ENCODE measurements at regions of chr10 and their contacts with region 1.

Region 1: DNA sequence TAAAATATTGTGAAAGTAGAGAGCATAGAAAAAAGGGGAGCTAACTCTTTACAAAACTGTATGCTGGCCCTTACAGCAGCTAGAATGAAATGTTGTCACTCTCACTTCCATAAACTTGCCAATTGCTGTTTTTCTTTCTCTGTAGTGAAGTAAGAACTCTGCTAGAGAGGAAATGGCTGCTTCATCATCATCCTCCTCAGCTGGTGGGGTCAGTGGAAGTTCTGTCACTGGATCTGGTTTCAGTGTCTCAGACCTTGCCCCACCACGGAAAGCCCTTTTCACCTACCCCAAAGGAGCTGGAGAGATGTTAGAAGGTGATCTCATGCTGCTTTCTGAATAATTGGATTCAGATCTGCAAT is 7.6 kb upstream of the ASCC1 start:
- DNase-seq: no peak
- H3K4me3 ChIP-seq: peak overlapping the region in 1 of 59 donors; percentile 42
- H3K27ac ChIP-seq: peak overlapping the region in 57 of 59 donors; percentile 11 to 86 (median 74)
- H3K27me3 ChIP-seq: no peaks in the 10 kb centered on the region
- CTCF ChIP-seq: no peak

Region 2: GRCh38 chr10:71893920-71894319 is 329.8 kb before region 1 on chr10:
- intact Hi-C with region 1: loop called in 1 of 2 experiments (anchors 10 kb)
- DNase-seq: no peak
- H3K4me3 ChIP-seq: no peak overlapping the region
- H3K27ac ChIP-seq: no peak overlapping the region
- H3K27me3 ChIP-seq: no peaks in the 10 kb centered on the region
- CTCF ChIP-seq: no peak

Region 3: GRCh38 chr10:71957546-71958275 is 266.0 kb before region 1 on chr10:
- intact Hi-C with region 1: loop called (anchors 10 kb)
- DNase-seq: no peak
- H3K4me3 ChIP-seq: no peak overlapping the region
- H3K27ac ChIP-seq: peak overlapping the region in 55 of 59 donors; percentile 1 to 86 (median 64)
- H3K27me3 ChIP-seq: no peaks in the 10 kb centered on the region
- CTCF ChIP-seq: peak in 6 of 56 donors; percentile 6 to 22 (median 12)

Region 4: GRCh38 chr10:72058989-72059842 is 164.5 kb before region 1 on chr10:
- intact Hi-C with region 1: loop called (anchors 5 to 10 kb)
- DNase-seq: peak in 1 of 10 donors; percentile 49
- H3K4me3 ChIP-seq: no peak overlapping the region
- H3K27ac ChIP-seq: peak overlapping the region in 3 of 59 donors; percentile 12 to 44 (median 27)
- H3K27me3 ChIP-seq: no peaks in the 10 kb centered on the region
- CTCF ChIP-seq: no peak

Region 5: DNA sequence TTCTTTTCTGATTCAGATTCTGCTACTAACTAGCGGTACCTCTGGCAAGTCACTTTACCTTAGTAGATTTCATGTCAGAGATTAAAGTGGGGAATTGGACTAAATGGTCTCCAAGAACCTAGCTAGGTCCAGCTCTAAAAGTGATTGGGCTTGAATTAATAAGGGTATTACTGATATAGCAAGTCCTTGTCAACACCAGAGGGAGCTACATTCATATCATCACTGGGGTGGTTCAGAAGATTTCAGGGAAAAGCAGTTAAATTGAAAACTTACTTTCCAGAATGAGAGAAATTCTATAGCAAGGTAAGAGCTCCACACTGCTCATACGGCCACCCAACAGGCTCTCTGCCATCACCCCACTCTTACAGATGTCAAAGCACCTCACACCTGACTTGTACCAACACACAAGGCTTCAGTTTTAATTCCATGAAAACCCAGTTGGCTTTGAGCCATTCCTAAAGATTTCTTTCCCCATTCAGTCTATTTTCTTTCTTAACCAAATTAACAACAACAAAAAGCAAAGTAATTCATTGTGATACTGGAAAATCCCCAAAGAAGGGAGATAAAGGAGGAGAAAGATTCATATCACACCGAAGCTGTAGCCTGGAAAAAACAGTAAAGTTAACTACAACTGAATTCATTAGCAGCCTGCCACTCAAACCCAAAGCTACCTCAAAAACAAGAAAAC is 97.4 kb before region 1 on chr10:
- intact Hi-C with region 1: loop called (anchors 1 to 10 kb)
- DNase-seq: no peak
- H3K4me3 ChIP-seq: no peak overlapping the region
- H3K27ac ChIP-seq: peak overlapping the region in 35 of 59 donors; percentile 0 to 71 (median 38)
- H3K27me3 ChIP-seq: no peaks in the 10 kb centered on the region
- CTCF ChIP-seq: peak; percentile 16 to 71 (median 50)

Region 6: DNA sequence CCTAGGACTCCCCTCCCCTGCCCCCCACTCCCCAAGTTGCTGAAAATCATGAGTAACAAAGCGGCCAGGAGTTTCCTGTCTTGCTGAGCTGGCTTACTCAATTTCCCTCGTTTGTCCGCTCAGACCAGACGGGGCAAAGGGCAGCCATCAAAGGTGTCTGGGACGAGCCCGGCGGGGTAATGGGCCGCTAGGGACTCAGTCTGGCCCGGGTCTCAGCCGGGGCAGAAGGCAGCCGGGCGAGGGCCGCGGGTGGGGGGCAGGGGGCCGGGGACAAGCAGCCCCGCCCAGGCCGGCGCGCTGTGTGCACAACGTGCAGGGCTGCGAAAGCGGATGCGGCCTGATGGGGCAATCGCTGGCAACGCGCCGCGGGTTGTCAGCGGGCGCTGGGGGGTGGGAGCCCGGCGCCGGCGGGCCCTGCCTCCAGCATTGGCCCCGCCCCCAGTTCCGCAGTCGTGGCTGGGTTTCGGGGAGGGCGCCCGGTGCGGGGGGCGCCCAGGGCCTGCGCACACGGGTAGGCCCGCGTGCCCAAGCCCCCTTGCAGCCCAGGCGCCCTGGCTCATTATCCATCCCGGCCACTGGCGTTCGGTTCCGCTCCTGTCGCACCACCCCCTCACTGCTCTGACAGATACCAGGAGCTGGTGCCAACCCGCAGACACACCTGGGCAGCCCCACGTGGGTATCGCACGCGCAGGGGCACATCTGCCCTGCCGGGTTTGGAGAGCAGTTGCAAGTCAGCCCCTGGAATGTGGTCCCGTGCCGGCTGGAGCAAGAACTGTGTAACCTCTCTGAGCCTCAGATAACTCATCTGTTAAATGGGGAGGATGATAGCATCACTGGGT is 95.9 kb after region 1 on chr10:
- intact Hi-C with region 1: loop called in 1 of 2 experiments (anchors 5 kb)
- DNase-seq: peak in 9 of 10 donors; percentile 58 to 90 (median 81)
- H3K4me3 ChIP-seq: peak overlapping the region; percentile 35 to 70 (median 53)
- H3K27ac ChIP-seq: peak overlapping the region; percentile 40 to 98 (median 92)
- H3K27me3 ChIP-seq: no peaks in the 10 kb centered on the region
- CTCF ChIP-seq: peak in 14 of 56 donors; percentile 4 to 31 (median 20)

Region 7: DNA sequence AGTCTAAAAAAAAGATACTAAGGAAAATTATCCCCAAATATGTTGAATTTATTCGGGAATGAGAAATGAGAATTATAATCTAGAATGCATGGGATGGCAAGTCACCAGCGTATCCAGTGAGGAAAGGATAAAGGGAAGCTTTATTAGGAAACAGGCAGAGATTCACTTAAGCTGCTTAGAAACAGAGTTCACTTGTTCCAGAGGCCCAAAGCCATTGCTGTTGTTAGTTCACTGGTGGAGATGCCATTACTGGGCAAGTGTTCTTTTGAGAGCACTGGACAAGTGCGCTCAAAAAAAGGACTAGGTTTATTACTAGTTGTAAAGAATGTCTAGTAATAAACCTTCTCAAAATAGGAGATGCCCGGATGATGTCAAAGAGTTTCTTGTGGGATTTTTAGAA is 350.9 kb after region 1 on chr10:
- intact Hi-C with region 1: no loop called
- DNase-seq: no peak
- H3K4me3 ChIP-seq: peak overlapping the region in 3 of 59 donors; percentile 1 to 5 (median 4)
- H3K27ac ChIP-seq: peak overlapping the region in 34 of 59 donors; percentile 2 to 73 (median 40)
- H3K27me3 ChIP-seq: no peaks in the 10 kb centered on the region
- CTCF ChIP-seq: no peak

Measured in dorsolateral prefrontal cortex (tissue), 120 donors.